Activated CD8-positive, alpha-beta T cell treated with anti-CD3 and anti-CD28 coated beads, Interleukin-2, amount 10 ng/mL, durations not matched to agents 7 days and 5 days (primary cell): ENCODE measurements at regions of chr17 and their contacts with region 1.

Region 1: DNA sequence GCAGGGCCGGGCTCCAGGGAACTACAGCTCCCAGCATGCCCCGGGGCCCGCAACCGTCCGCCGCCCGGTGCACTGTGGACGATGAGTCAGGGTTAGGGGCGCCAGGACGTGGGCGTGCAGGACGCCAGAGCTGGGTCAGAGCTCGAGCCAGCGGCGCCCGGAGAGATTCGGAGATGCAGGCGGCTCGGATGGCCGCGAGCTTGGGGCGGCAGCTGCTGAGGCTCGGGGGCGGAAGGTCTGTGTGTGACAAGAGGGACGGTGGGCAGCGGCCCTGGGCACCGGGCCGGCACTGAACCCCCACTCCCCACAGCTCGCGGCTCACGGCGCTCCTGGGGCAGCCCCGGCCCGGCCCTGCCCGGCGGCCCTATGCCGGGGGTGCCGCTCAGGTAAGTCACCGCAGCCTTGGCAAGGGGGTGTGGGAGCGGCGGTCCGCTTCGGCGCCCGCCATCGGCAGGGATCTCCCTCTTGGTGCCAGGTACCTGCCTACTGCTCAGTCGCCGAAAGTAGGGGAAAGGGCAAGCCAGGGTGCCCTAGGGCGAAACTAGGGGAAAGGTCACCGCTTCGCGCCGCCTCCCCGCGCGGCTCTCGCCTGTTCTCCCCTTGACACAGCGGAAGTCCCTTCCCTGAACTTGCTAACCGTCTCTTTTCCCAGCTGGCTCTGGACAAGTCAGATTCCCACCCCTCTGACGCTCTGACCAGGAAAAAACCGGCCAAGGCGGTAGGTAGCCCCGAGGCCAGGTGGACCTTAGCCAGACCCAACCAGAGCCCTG is at the starts of genes ACADVL and DLG4:
- DNase-seq: peak; percentile 85
- ATAC-seq: peak; percentile 75
- H3K4me3 Mint-ChIP-seq: peak within 1 kb of the TSS; percentile 96
- H3K27ac Mint-ChIP-seq: peak within 1 kb of the TSS; percentile 95
- H3K4me1 Mint-ChIP-seq: peaks cover 56% of the 10 kb centered on the region
- H3K27me3 Mint-ChIP-seq: no peaks in the 10 kb centered on the region
- total RNA-seq, gene ACADVL: 348 to 371 TPM
- total RNA-seq, gene DLG4: 10.1 to 11.7 TPM

Region 2: DNA sequence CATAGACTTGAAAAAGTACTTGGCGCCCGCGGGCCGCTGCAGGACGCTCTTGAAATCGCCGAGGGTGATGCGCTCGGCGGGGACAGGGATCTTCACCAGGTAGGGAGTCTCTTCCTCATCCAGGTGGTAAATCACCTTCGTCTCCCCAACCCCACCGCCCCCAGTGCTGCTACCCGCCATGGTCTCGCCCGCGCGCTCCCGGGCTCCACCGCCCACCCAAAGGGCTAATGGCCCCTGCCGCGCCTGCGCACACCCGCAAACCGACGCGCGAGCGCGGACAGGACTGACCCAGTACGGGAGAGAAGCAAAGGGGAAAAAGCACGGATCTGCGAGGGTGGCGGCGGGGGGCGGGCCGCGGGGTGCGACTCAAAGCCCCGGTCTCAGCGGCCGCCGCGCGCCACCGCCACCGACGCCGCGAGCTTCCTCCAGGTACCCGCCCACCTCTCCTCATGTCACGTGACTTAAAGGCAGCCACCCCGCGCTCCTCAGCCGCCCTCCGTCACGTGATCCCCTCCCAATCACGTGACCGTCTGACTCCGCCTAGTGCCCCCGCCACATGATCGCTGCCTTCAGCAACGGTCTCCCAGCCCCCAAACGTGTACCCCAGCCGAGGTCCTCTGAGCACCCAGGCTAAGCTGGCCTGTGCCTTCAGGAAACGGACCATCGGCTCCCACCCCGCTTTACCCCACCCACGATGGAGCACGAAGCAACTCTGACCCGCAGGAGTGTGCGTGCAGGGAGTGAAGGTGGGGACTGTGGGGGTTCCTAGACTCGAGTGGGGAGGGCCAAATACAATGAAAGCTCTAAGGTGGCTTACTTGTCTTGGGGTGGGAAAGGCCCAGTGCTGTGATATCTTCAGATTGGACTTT is 14.3 kb after region 1 on chr17 and contains the start of gene DVL2:
- CTCF ChIA-PET with region 1: interaction called, 36 read pairs
- POLR2A ChIA-PET with region 1: interaction called, 35 read pairs
- DNase-seq: peak; percentile 97
- ATAC-seq: peak; percentile 54
- H3K4me3 Mint-ChIP-seq: peak within 1 kb of the TSS; percentile 90
- H3K27ac Mint-ChIP-seq: peak within 1 kb of the TSS; percentile 83
- H3K4me1 Mint-ChIP-seq: peaks cover 51% of the 10 kb centered on the region
- H3K27me3 Mint-ChIP-seq: no peaks in the 10 kb centered on the region
- total RNA-seq, gene DVL2: 52.4 to 56.6 TPM

Region 3: GRCh38 chr17:7239091-7240027 is 19.4 kb after region 1 on chr17 and contains the start of gene PHF23:
- CTCF ChIA-PET with region 1: interaction called, 36 read pairs
- POLR2A ChIA-PET with region 1: interaction called, 35 read pairs
- DNase-seq: peak; percentile 98
- ATAC-seq: peak; percentile 67
- H3K4me3 Mint-ChIP-seq: peak within 1 kb of the TSS; percentile 98
- H3K27ac Mint-ChIP-seq: peak within 1 kb of the TSS; percentile 91
- H3K4me1 Mint-ChIP-seq: peaks cover 66% of the 10 kb centered on the region
- H3K27me3 Mint-ChIP-seq: no peaks in the 10 kb centered on the region
- total RNA-seq, gene PHF23: 53.6 to 57.9 TPM